ENCODE measurements at regions of chr10 and their contacts with region 1.

Region 1: GRCh38 chr10:27504007-27504807 is at the start of gene RAB18:
- DNase-seq: peak; percentile 98
- H3K4me3 Mint-ChIP-seq: peak within 1 kb of the TSS; percentile 96
- H3K27ac Mint-ChIP-seq: peak within 1 kb of the TSS; percentile 96
- H3K4me1 Mint-ChIP-seq: peaks cover 38% of the 10 kb centered on the region
- H3K27me3 Mint-ChIP-seq: no peaks in the 10 kb centered on the region
- total RNA-seq, gene RAB18: 61.6 and 63.7 TPM in 2 replicates

Region 2: DNA sequence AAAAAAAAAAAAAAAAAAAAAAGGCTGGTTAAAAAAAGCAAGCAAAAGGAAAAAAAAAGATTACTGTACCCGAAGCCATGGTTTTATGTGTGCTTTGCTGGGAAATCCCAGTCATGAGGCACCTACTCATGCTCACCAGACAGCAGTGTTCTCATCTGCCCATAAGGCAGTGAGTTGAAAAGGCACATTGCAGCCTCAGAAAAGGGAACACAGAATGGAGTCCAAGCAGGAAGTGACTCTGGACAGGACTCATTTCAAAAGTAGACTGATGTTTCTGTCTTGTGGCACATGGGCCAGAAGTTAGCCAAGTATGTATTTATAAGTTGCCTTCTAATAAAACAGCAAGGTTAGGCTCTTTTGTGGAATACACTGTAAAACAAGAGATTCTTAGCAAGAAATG is 766.5 kb before region 1 on chr10:
- intact Hi-C with region 1: loop called (anchors 1 kb)
- DNase-seq: peak; percentile 59
- H3K4me3 Mint-ChIP-seq: peak overlapping the region; percentile 45
- H3K27ac Mint-ChIP-seq: peak overlapping the region; percentile 99
- H3K4me1 Mint-ChIP-seq: peaks cover 74% of the 10 kb centered on the region
- H3K27me3 Mint-ChIP-seq: no peaks in the 10 kb centered on the region

Region 3: DNA sequence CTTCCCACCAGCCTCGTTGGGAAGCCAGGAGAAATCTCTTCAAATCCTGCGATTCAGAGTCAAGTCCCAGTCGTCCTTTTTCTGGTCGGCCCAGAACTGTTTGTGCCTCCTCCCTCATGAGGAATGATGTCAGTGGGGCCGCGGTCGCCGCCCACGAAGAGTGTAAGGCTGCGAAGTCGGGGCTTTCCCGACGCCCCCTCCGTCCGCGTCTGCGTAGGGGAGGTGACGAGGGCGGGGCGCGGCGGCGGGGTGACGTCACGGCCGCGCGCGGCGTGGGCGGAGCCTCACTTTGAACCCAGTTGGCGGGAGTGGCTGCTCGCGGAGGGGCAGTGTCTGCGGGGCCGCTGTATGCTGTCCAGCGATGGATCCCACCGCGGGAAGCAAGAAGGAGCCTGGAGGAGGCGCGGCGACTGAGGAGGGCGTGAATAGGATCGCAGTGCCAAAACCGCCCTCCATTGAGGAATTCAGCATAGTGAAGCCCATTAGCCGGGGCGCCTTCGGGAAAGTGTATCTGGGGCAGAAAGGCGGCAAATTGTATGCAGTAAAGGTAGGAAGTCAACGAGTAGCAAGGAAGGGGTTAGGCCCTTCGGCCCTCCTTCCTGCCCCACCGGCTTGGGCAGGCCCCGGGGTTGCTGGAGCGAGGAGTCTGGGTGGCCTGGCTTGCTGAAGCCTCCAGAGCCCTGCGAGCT is 349.0 kb before region 1 on chr10 and contains the start of gene MASTL:
- intact Hi-C with region 1: loop called (anchors 1 kb)
- DNase-seq: peak; percentile 93
- H3K4me3 Mint-ChIP-seq: peak within 1 kb of the TSS; percentile 99
- H3K27ac Mint-ChIP-seq: peak within 1 kb of the TSS; percentile 99
- H3K4me1 Mint-ChIP-seq: peaks cover 42% of the 10 kb centered on the region
- H3K27me3 Mint-ChIP-seq: no peaks in the 10 kb centered on the region
- total RNA-seq, gene MASTL: 33.2 and 33.7 TPM in 2 replicates

Region 4: GRCh38 chr10:27446091-27446918 is 57.9 kb before region 1 on chr10:
- intact Hi-C with region 1: loop called (anchors 5 kb)
- DNase-seq: no peak
- H3K4me3 Mint-ChIP-seq: no peak overlapping the region
- H3K27ac Mint-ChIP-seq: no peak overlapping the region
- H3K4me1 Mint-ChIP-seq: no peaks in the 10 kb centered on the region
- H3K27me3 Mint-ChIP-seq: peaks cover 2% of the 10 kb centered on the region

Region 5: DNA sequence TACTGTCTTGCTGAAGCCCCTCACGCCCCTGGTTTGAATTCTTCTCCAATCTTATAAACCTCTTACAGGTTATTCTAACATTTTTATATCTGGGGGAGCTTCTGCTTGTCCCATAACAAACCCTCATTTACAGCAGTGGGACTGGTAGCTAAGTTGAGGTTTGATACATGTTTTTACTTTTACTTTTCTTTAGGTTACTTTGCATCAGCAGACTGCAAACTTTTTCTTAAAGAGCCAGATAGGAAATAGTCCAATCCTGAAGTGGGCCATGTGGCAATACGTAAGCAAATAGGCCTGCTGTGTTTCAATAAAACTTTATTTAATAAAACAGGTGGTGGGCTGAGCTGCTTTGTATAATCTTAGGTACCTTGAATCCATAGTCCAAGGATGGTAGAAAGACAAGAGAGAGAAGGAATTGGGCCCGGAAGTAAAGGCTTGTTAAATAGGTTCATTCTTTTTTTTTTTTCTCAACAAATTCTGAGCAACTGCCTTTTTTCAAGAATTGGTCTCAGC is 27.2 kb after region 1 on chr10:
- intact Hi-C with region 1: loop called (anchors 2 kb)
- DNase-seq: no peak
- H3K4me3 Mint-ChIP-seq: no peak overlapping the region
- H3K27ac Mint-ChIP-seq: peak overlapping the region; percentile 49
- H3K4me1 Mint-ChIP-seq: peaks cover 47% of the 10 kb centered on the region
- H3K27me3 Mint-ChIP-seq: no peaks in the 10 kb centered on the region

Region 6: DNA sequence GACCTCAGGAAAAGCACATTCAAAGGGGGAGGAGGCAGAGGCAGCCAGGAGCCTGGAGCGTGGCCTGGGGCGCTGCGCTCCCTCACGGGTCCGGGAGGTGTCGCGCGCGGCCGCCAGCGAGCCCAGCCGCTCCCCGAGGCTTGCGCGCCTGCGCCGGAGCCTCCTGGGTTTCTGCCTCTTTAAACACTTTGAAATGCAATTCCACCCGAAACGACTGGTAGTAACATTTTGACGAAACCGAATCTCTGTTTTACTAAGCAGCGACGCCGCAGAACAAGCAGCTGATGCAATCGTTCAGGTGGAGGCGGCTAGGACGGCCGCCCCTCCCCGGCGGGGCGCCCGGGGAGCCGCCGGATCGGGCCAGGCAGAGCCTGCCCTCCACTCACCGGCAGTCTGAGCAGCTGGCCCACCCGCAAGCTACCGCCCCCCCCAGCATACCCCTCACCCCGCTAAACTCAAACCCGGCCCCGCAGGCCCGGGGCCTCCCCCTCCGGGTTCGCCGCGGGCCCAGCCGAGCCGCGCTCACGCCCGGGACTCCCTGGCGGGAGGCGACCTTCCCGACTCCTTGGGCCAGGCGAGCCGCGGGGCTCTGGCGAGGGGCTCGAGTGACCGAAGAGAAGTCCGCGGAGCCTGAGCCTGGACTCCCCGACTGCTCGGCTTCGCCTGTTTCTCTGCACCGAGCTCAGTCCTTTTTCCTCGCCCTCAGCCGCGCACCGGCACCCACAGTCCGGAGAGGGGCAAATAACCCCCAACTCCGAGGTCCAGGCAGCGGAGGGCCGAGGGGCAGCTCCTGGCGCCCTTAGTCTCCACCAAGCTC is 238.2 kb after region 1 on chr10:
- intact Hi-C with region 1: loop called (anchors 5 kb)
- DNase-seq: peak; percentile 73
- H3K4me3 Mint-ChIP-seq: peak overlapping the region; percentile 65
- H3K27ac Mint-ChIP-seq: no peak overlapping the region
- H3K4me1 Mint-ChIP-seq: peaks cover 34% of the 10 kb centered on the region
- H3K27me3 Mint-ChIP-seq: peaks cover 63% of the 10 kb centered on the region

Measured in activated T-helper 1 cell treated with anti-CD3 and anti-CD28 coated beads, Interleukin-12 subunit alpha, Interleukin-12 subunit beta, Interleukin-2, Interleukin-4 antibody, amounts not matched to agents 30 ng/mL and 10 ng/mL and 1 ng/mL, durations not matched to agents 14 hours and 24 hours and 36 hours (primary cell).